ENCODE measurements at regions of chr22 and their contacts with region 1.

Region 1: DNA sequence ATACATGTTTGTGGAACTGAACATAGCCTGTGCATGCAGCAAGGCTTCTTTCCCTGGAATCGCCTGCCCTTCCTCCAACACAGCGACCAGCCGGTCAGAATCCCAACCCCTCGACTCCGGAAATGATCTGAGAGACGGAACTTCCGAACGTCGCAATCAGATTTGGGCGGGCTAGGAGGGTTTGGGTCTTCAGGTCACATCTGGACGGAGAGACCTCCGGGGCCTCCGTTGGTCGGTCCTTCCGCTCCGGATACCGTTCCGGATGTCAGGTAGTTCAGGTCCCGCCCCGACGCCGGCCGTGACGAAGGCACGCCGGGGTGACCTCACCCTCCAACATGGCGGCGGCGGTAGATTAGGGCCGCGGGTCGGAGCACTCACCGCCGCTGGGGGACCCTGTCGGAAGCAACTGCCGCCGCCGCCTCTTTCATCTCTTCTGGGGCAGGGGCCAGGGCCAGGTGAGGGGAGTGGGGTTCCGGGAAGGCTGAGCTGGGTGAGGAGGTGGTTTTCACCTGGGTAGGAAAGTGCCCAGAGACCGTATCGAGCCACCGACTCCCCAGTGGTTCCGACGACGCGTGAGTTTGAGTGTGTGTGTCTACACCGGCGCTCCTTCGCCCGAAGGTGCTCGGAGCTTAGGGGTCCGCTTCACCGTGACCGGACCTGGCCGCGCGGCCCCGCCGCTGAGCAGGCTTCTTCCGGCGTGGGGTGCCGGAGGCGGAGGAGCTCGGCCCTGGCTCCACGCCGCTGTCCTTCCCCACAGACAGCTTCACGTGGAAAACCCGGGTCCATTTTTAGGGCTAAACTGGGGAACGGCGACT is at the start of gene BCL2L13:
- DNase-seq: peak; percentile 87
- ATAC-seq: peak; percentile 93
- H3K4me3 Mint-ChIP-seq: peak within 1 kb of the TSS; percentile 88
- H3K27ac Mint-ChIP-seq: peak within 1 kb of the TSS; percentile 94
- H3K4me1 Mint-ChIP-seq: peaks cover 28% of the 10 kb centered on the region
- H3K27me3 Mint-ChIP-seq: no peaks in the 10 kb centered on the region
- CTCF ChIP-seq: no peak
- total RNA-seq, gene BCL2L13: 30.1 and 38.7 TPM in 2 replicates

Region 2: GRCh38 chr22:17084554-17085276 is 553.9 kb before region 1 on chr22 and contains the start of gene IL17RA:
- CTCF ChIA-PET with region 1: no interaction called
- POLR2A ChIA-PET with region 1: no interaction called
- intact Hi-C with region 1: loop called (anchors 10 kb)
- DNase-seq: peak; percentile 96
- ATAC-seq: peak; percentile 99
- H3K4me3 Mint-ChIP-seq: peak within 1 kb of the TSS; percentile 89
- H3K27ac Mint-ChIP-seq: peak within 1 kb of the TSS; percentile 81
- H3K4me1 Mint-ChIP-seq: peaks cover 40% of the 10 kb centered on the region
- H3K27me3 Mint-ChIP-seq: no peaks in the 10 kb centered on the region
- CTCF ChIP-seq: no peak
- total RNA-seq, gene IL17RA: 15.7 and 18.1 TPM in 2 replicates

Region 3: DNA sequence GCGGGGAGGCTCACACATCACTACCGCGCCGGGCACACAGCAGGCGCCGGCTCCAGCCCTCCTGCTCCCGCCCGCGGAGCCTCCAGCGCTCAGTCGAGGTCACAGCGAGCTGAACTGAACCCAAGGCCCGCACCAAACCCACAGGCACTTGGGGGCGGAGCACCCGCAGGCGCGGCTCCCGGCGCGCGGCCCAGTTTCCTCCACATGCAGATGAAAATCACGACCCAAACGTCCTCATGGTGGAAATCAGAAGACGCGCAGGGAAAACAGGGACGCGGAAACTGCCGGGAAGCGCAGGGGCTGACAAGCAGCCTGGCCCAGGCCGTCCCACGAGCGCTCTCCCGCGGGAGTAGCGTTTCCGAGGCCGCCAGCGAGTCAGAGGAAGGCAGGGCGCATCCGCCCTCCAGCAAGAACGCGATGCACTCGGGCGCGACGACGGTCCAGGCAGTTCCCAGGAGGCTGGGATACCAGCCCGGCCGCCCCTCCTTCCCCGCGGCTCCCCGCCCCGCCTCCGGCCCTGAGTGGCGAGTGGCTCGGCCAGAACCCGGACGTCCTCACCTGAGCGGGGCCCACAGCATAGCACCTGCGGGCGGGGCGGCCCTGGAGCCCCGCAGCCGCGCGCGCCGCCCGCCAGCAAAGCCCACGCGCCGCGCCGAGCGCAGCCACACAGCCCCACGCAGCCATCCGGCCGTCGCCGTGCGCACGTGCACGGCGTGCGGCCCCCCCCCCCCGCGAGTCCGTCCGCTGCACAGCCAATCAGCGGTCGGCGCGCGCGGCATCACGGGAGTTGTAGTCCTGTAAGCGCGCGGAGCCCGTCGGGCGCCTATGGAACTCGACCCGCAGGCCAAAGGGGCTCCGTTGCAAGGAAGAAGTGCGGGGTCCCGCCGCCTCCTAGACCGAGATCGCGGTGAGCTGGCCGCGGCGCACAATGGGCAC is 479.8 kb before region 1 on chr22 and contains the start of gene HDHD5:
- CTCF ChIA-PET with region 1: no interaction called
- POLR2A ChIA-PET with region 1: no interaction called
- intact Hi-C with region 1: loop called (anchors 5 kb)
- DNase-seq: peak; percentile 82
- ATAC-seq: peak; percentile 91
- H3K4me3 Mint-ChIP-seq: peak within 1 kb of the TSS; percentile 83
- H3K27ac Mint-ChIP-seq: peak within 1 kb of the TSS; percentile 59
- H3K4me1 Mint-ChIP-seq: peaks cover 26% of the 10 kb centered on the region
- H3K27me3 Mint-ChIP-seq: no peaks in the 10 kb centered on the region
- CTCF ChIP-seq: no peak
- total RNA-seq, gene HDHD5: 23.9 and 25.2 TPM in 2 replicates

Region 4: DNA sequence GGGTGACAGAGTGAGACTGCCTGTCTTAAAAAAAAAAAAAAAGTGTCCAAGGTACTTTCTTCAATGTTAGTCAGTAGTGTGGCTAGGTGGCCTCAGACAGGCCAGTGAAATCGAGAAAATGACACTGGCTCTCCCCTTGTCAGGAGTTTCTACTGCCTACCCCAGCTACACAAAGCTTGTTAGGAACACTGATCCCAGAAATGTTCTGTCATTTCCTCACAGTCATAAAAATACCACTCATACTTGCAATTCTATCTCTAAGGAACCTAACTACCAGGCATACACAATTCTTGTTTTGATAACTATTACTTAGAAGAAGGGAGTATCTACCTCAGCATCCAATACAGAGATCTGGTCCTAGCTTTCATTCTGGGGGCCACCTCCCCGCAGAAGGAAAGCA is 41.4 kb before region 1 on chr22:
- CTCF ChIA-PET with region 1: no interaction called
- POLR2A ChIA-PET with region 1: interaction called, 14 read pairs
- intact Hi-C with region 1: loop called (anchors 1 kb)
- DNase-seq: no peak
- ATAC-seq: no peak
- H3K4me3 Mint-ChIP-seq: no peak overlapping the region
- H3K27ac Mint-ChIP-seq: no peak overlapping the region
- H3K4me1 Mint-ChIP-seq: peaks cover 33% of the 10 kb centered on the region
- H3K27me3 Mint-ChIP-seq: no peaks in the 10 kb centered on the region
- CTCF ChIP-seq: no peak

Region 5: GRCh38 chr22:17628304-17629166 is 10.1 kb before region 1 on chr22 and contains the start of gene ATP6V1E1:
- CTCF ChIA-PET with region 1: no interaction called
- POLR2A ChIA-PET with region 1: interaction called, 8 read pairs
- intact Hi-C with region 1: loop called (anchors 1 kb)
- DNase-seq: peak; percentile 94
- ATAC-seq: peak; percentile 100
- H3K4me3 Mint-ChIP-seq: peak within 1 kb of the TSS; percentile 98
- H3K27ac Mint-ChIP-seq: peak within 1 kb of the TSS; percentile 97
- H3K4me1 Mint-ChIP-seq: peaks cover 32% of the 10 kb centered on the region
- H3K27me3 Mint-ChIP-seq: no peaks in the 10 kb centered on the region
- CTCF ChIP-seq: no peak
- total RNA-seq, gene ATP6V1E1: 73.9 and 74.0 TPM in 2 replicates

Region 6: GRCh38 chr22:17706018-17706900 is 67.6 kb after region 1 on chr22:
- CTCF ChIA-PET with region 1: no interaction called
- POLR2A ChIA-PET with region 1: interaction called, 12 read pairs
- intact Hi-C with region 1: loop called (anchors 5 kb)
- DNase-seq: no peak
- ATAC-seq: peak; percentile 89
- H3K4me3 Mint-ChIP-seq: peak overlapping the region; percentile 56
- H3K27ac Mint-ChIP-seq: peak overlapping the region; percentile 81
- H3K4me1 Mint-ChIP-seq: peaks cover 21% of the 10 kb centered on the region
- H3K27me3 Mint-ChIP-seq: no peaks in the 10 kb centered on the region
- CTCF ChIP-seq: no peak

Region 7: DNA sequence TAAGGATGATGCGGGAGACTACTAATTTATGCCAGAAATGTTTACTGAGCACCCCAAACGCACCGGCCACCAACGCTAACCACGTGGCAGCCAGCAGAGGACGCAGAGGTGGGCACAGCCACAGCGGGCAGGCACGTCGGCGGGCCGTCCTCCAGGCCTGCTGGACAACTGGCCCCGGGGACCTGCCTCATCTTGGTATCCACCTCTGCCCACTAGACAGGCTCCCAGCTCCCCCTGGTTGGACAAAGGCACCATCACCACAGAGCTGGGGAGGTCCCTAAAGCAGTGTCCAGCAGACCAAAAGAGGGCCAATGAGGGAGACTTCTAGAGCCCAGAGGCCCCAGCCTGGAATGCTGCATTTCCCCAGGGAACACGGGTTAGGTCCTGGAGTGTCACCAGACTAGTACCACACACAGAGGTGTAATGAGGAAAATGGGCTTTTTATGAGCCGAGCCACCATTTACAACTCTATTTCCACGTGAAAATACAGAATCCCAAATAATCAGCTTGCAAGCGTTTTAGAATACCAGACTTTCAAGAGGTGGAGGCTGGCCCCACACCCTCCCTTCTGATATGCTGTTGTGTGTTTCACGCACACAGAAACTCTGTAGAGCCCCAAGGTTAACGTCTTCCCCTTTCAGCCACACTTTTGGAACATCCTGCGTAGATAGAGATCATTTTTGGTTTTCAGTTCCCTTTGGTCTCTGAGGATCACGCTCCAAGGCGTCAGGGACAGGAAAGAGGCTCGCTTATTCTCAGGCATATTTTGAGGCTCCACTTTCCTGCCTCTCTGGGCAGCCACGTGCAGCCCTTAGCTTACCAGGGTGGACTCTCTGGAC is 159.3 kb after region 1 on chr22:
- CTCF ChIA-PET with region 1: no interaction called
- POLR2A ChIA-PET with region 1: interaction called, 3 read pairs
- intact Hi-C with region 1: loop called (anchors 1 kb)
- DNase-seq: peak; percentile 41
- ATAC-seq: peak; percentile 62
- H3K4me3 Mint-ChIP-seq: peak overlapping the region; percentile 49
- H3K27ac Mint-ChIP-seq: peak overlapping the region; percentile 99
- H3K4me1 Mint-ChIP-seq: peaks cover 87% of the 10 kb centered on the region
- H3K27me3 Mint-ChIP-seq: no peaks in the 10 kb centered on the region
- CTCF ChIP-seq: no peak

Region 8: DNA sequence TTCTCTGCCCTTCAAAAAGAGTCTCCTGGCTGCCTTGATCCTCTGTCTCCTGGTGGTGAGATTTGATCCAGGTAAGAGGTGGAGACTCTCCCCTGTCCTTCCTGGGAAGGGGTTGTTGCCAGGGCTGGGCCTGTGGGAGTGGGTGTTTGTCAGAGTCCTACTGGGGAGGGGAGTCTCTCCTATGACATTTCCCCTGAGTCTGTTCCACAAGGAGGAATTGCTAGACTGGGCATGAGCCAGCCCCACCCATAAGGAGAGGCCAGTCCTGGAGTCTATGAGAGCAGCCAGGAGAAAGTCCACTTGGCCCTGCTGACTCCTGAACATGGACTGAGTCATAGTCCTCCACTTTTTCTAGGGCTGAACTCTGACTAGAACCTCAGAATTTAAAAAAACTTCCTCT is 446.5 kb after region 1 on chr22:
- CTCF ChIA-PET with region 1: no interaction called
- POLR2A ChIA-PET with region 1: no interaction called
- intact Hi-C with region 1: no loop called
- DNase-seq: no peak
- ATAC-seq: no peak
- H3K4me3 Mint-ChIP-seq: no peak overlapping the region
- H3K27ac Mint-ChIP-seq: no peak overlapping the region
- H3K4me1 Mint-ChIP-seq: peaks cover 11% of the 10 kb centered on the region
- H3K27me3 Mint-ChIP-seq: no peaks in the 10 kb centered on the region
- CTCF ChIP-seq: no peak